HCT116 (cell line): ENCODE measurements at regions of chr19 and their contacts with region 1.

Region 1: DNA sequence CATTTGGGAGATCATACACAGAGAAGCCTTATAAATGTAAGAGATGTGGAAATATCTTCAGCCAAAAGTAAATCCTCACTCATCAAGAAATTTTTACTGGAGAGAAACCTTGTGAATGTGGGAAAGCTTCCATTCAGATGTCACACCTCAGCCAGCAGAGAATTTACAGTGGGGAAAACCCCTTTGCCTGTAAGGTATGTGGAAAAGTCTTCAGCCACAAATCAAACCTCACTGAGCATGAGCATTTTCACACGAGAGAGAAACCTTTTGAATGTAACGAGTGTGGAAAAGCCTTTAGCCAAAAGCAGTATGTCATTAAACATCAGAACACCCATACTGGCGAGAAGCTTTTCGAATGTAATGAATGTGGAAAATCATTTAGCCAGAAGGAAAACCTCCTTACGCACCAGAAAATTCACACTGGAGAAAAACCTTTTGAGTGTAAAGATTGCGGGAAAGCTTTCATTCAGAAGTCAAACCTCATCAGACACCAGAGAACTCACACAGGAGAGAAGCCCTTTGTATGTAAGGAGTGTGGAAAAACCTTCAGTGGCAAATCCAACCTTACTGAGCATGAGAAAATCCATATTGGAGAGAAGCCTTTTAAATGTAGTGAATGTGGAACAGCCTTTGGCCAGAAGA is 21.5 kb downstream of the ZNF146 start:
- DNase-seq: no peak
- ATAC-seq: no peak
- H3K4me3 ChIP-seq: no peak overlapping the region
- H3K27ac ChIP-seq: no peak overlapping the region
- H3K4me1 ChIP-seq: no peaks in the 10 kb centered on the region
- H3K27me3 ChIP-seq: no peaks in the 10 kb centered on the region
- CTCF ChIP-seq: no peak
- POLR2A ChIP-seq: no peak
- RAD21 ChIP-seq: no peak

Region 2: DNA sequence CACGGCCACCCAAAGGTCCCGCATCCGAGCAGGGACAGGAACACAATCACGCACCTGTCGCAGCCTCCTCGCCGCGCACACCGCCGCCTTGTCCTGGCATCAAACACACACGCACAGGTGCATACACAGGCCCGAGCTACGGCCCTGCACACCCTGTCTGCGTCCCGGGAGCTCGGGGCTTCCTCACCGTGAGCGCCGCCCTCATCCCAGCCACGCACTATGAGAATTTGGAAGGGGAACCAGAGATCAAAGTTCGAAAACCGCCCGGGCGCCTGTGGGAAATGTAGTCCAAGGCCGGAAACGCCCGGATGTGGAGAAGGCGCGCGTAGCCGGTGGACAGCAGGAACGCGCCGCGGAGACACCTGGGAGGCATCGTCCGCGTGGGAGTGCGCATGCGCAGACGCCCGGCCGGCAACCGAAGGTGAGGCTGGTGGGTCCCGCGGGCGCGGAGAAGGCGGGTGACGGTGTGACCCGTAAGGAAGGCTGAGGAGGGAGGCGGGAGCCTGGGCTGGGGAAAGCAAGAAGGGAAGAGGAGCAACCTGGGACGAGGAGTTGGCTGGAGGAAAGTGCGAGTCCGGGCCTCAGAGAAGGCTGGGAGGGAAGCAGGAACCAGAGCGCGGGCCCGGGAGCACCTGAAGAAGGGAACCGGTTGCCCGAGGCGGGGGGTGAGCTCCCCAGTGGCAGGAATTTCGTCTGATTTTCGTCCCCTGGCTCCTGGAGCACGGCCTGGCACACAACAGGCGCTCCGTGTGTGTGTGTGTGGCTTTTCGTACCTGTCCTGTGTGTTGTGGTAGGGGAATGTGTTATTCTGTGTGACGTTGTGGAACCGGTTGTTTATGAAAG is 451.0 kb after region 1 on chr19 and contains the start of gene ZNF567:
- CTCF ChIA-PET with region 1: no interaction called
- POLR2A ChIA-PET with region 1: no interaction called
- RAD21 ChIA-PET with region 1: no interaction called
- intact Hi-C with region 1: loop called (anchors 5 kb)
- DNase-seq: peak; percentile 93
- ATAC-seq: peak; percentile 96
- H3K4me3 ChIP-seq: peak within 1 kb of the TSS; percentile 88 to 90
- H3K27ac ChIP-seq: peak within 1 kb of the TSS; percentile 59
- H3K4me1 ChIP-seq: peaks cover 0 to 13% of the 10 kb centered on the region in 2 experiments; a peak in 1 of 4 replicates
- H3K27me3 ChIP-seq: no peaks in the 10 kb centered on the region
- CTCF ChIP-seq: 0 out of 6 replicates have a peak, but pooled peaks of 1 of the 3 experiments have one; percentile 1
- POLR2A ChIP-seq: no peak
- RAD21 ChIP-seq: no peak
- total RNA-seq, gene ZNF567: 5.6 TPM